ENCODE measurements at regions of chr3 and their contacts with region 1.

Region 1: DNA sequence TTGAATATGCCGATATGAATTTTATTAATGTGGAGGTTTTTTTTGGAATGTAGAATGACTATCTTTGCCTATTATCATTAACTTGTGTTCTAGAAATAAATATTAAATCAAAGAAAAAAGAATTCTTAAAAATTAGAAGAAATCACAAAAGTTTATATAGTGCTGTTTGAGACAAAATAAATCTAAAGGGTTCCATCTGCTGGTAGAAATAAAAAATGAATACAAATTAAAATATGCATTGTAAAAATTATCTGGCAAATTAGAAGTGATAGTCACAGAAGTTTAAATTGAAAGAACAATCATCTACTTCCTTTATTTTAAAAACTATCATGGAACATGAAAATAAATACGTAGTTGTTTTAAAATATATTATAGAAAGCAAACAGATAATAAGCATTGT is 22.7 kb upstream of the ZBTB20 start:
- DNase-seq: no peak
- H3K4me3 Mint-ChIP-seq: no peak overlapping the region
- H3K27ac Mint-ChIP-seq: no peak overlapping the region
- H3K4me1 Mint-ChIP-seq: no peaks in the 10 kb centered on the region
- H3K27me3 Mint-ChIP-seq: no peaks in the 10 kb centered on the region
- CTCF ChIP-seq: peak; percentile 30

Region 2: GRCh38 chr3:114362815-114363214 is 807.0 kb before region 1 on chr3:
- CTCF ChIA-PET with region 1: interaction called, 9 read pairs
- POLR2A ChIA-PET with region 1: no interaction called
- intact Hi-C with region 1: loop called (anchors 5 kb)
- DNase-seq: peak; percentile 33
- H3K4me3 Mint-ChIP-seq: no peak overlapping the region
- H3K27ac Mint-ChIP-seq: no peak overlapping the region
- H3K4me1 Mint-ChIP-seq: peaks cover 7% of the 10 kb centered on the region
- H3K27me3 Mint-ChIP-seq: no peaks in the 10 kb centered on the region
- CTCF ChIP-seq: peak; percentile 48

Region 3: GRCh38 chr3:114827495-114827894 is 342.3 kb before region 1 on chr3:
- CTCF ChIA-PET with region 1: interaction called, 6 read pairs
- POLR2A ChIA-PET with region 1: no interaction called
- intact Hi-C with region 1: loop called (anchors 1 kb)
- DNase-seq: peak; percentile 50
- H3K4me3 Mint-ChIP-seq: no peak overlapping the region
- H3K27ac Mint-ChIP-seq: no peak overlapping the region
- H3K4me1 Mint-ChIP-seq: no peaks in the 10 kb centered on the region
- H3K27me3 Mint-ChIP-seq: no peaks in the 10 kb centered on the region
- CTCF ChIP-seq: peak; percentile 64

Region 4: GRCh38 chr3:115040673-115041286 is 129.0 kb before region 1 on chr3:
- CTCF ChIA-PET with region 1: interaction called, 8 read pairs
- POLR2A ChIA-PET with region 1: no interaction called
- intact Hi-C with region 1: loop called (anchors 1 kb)
- DNase-seq: peak; percentile 51
- H3K4me3 Mint-ChIP-seq: no peak overlapping the region
- H3K27ac Mint-ChIP-seq: no peak overlapping the region
- H3K4me1 Mint-ChIP-seq: no peaks in the 10 kb centered on the region
- H3K27me3 Mint-ChIP-seq: no peaks in the 10 kb centered on the region
- CTCF ChIP-seq: peak; percentile 51

Region 5: GRCh38 chr3:115147329-115148141 is 22.3 kb before region 1 on chr3:
- CTCF ChIA-PET with region 1: interaction called, 8 read pairs
- POLR2A ChIA-PET with region 1: interaction called, 43 read pairs
- intact Hi-C with region 1: no loop called
- DNase-seq: peak; percentile 100
- H3K4me3 Mint-ChIP-seq: peak overlapping the region; percentile 82
- H3K27ac Mint-ChIP-seq: peak overlapping the region; percentile 97
- H3K4me1 Mint-ChIP-seq: peaks cover 6% of the 10 kb centered on the region
- H3K27me3 Mint-ChIP-seq: no peaks in the 10 kb centered on the region
- CTCF ChIP-seq: no peak

Region 6: GRCh38 chr3:115445561-115445960 is 275.8 kb after region 1 on chr3:
- CTCF ChIA-PET with region 1: no interaction called
- POLR2A ChIA-PET with region 1: no interaction called
- intact Hi-C with region 1: no loop called
- DNase-seq: no peak
- H3K4me3 Mint-ChIP-seq: no peak overlapping the region
- H3K27ac Mint-ChIP-seq: no peak overlapping the region
- H3K4me1 Mint-ChIP-seq: no peaks in the 10 kb centered on the region
- H3K27me3 Mint-ChIP-seq: no peaks in the 10 kb centered on the region
- CTCF ChIP-seq: no peak